Activated CD4-positive, alpha-beta T cell treated with anti-CD3 and anti-CD28 coated beads for 36 hours (primary cell): ENCODE measurements at regions of chrX and their contacts with region 1.

Region 1: DNA sequence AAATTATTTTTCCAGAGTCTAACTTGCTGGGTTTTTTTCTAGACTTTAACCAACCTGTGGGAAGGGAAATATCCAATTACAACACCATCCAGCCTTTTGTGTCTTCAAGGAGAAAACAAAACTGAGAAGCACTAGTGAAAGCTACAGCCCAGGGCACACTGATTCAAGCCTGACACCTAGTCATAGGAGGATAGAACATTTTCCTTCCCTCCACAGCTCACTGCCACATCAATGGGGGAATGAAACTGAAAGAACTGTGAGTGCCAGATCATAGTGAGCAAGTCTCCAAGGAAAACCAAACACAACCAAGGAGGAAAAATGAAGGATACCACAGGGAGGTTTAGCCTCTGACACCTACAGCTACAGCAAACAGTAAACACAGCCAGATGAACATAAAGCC is 43.3 kb upstream of the MAGEA8 start:
- DNase-seq: peak; percentile 40
- ATAC-seq: peak; percentile 98
- H3K4me3 Mint-ChIP-seq: no peak overlapping the region
- H3K27ac Mint-ChIP-seq: no peak overlapping the region
- H3K4me1 Mint-ChIP-seq: peaks cover 10% of the 10 kb centered on the region
- H3K27me3 Mint-ChIP-seq: peaks cover 5% of the 10 kb centered on the region

Region 2: DNA sequence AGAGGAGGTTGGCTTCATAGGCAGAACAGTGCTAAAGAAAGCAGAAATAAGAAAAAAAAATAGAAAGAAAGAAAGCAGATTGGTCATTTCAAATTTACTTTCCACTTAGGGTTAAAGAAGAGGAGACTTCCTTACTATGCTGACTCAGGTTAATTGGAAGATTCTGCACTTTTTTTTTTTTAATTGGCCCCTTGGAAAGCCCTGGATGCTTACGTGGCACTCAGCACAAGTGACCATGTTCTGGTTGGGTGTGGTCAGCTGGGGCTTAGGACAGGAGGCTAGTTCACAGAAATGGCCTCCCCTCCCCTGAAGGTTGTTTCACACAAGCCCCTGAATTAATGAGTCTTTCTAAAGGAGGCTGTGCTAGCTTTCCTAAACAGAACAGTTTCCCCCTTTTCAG is 264.9 kb before region 1 on chrX:
- CTCF ChIA-PET with region 1: no interaction called
- POLR2A ChIA-PET with region 1: no interaction called
- intact Hi-C with region 1: no loop called
- DNase-seq: no peak
- ATAC-seq: no peak
- H3K4me3 Mint-ChIP-seq: no peak overlapping the region
- H3K27ac Mint-ChIP-seq: peak overlapping the region; percentile 55
- H3K4me1 Mint-ChIP-seq: peaks cover 18% of the 10 kb centered on the region
- H3K27me3 Mint-ChIP-seq: peaks cover 4% of the 10 kb centered on the region

Region 3: GRCh38 chrX:149611623-149612175 is 225.9 kb before region 1 on chrX:
- CTCF ChIA-PET with region 1: no interaction called
- POLR2A ChIA-PET with region 1: no interaction called
- intact Hi-C with region 1: no loop called
- DNase-seq: no peak
- ATAC-seq: no peak
- H3K4me3 Mint-ChIP-seq: no peak overlapping the region
- H3K27ac Mint-ChIP-seq: no peak overlapping the region
- H3K4me1 Mint-ChIP-seq: no peaks in the 10 kb centered on the region
- H3K27me3 Mint-ChIP-seq: no peaks in the 10 kb centered on the region

Region 4: GRCh38 chrX:149903889-149904748 is 66.5 kb after region 1 on chrX:
- CTCF ChIA-PET with region 1: no interaction called
- POLR2A ChIA-PET with region 1: no interaction called
- intact Hi-C with region 1: loop called (anchors 2 to 5 kb)
- DNase-seq: no peak
- ATAC-seq: peak; percentile 97
- H3K4me3 Mint-ChIP-seq: peak overlapping the region; percentile 48
- H3K27ac Mint-ChIP-seq: peak overlapping the region; percentile 44
- H3K4me1 Mint-ChIP-seq: peaks cover 8% of the 10 kb centered on the region
- H3K27me3 Mint-ChIP-seq: no peaks in the 10 kb centered on the region

Region 5: GRCh38 chrX:150200820-150201287 is 363.2 kb after region 1 on chrX:
- CTCF ChIA-PET with region 1: no interaction called
- POLR2A ChIA-PET with region 1: no interaction called
- intact Hi-C with region 1: loop called in 1 of 2 experiments (anchors 1 kb)
- DNase-seq: peak; percentile 83
- ATAC-seq: peak; percentile 99
- H3K4me3 Mint-ChIP-seq: no peak overlapping the region
- H3K27ac Mint-ChIP-seq: no peak overlapping the region
- H3K4me1 Mint-ChIP-seq: peaks cover 10% of the 10 kb centered on the region
- H3K27me3 Mint-ChIP-seq: no peaks in the 10 kb centered on the region